ENCODE measurements at regions of chr2 and their contacts with region 1.

Region 1: DNA sequence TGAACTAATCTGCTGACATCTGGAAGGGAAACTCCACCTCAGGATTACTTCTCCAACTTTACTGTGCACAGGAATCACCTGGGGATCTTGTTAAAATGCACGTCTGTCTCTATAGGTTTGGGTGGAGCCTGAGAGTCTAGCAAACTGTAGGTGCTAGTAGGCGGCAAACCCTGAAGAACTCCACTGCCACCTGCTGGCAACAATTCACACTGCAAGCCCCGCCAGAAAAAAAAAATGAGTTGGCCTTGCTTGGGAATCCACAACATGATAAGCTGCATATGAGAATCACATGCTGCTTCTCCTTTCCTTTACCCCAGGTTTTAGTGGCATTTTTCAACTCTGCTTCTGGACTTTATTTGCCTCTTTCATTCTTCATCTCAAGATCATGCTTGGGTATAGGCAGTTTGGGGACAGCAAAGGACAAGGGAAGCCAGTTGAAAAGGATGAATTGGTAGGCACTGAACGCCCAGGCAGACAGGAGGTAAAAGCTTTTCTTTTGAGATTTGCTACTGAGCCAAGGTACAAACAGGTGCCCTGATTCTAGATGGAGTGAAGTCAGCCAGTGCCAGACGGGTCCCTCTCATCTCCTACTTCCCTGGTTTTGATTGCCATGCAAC is 88.8 kb downstream of the VIT start:
- DNase-seq: peak; percentile 84
- ATAC-seq: peak; percentile 83
- H3K4me3 ChIP-seq: no peak overlapping the region
- H3K27ac ChIP-seq: no peak overlapping the region
- H3K4me1 ChIP-seq: no peaks in the 10 kb centered on the region
- H3K27me3 ChIP-seq: peaks cover 13% of the 10 kb centered on the region
- CTCF ChIP-seq: peak; percentile 95

Region 2: GRCh38 chr2:35871672-35872071 is 913.6 kb before region 1 on chr2:
- CTCF ChIA-PET with region 1: no interaction called
- POLR2A ChIA-PET with region 1: no interaction called
- intact Hi-C with region 1: loop called (anchors 5 kb)
- DNase-seq: peak; percentile 61
- ATAC-seq: peak; percentile 60; the same call in 1 of the 2 replicates
- H3K4me3 ChIP-seq: no peak overlapping the region
- H3K27ac ChIP-seq: no peak overlapping the region
- H3K4me1 ChIP-seq: no peaks in the 10 kb centered on the region
- H3K27me3 ChIP-seq: no peaks in the 10 kb centered on the region
- CTCF ChIP-seq: peak; percentile 65

Region 3: DNA sequence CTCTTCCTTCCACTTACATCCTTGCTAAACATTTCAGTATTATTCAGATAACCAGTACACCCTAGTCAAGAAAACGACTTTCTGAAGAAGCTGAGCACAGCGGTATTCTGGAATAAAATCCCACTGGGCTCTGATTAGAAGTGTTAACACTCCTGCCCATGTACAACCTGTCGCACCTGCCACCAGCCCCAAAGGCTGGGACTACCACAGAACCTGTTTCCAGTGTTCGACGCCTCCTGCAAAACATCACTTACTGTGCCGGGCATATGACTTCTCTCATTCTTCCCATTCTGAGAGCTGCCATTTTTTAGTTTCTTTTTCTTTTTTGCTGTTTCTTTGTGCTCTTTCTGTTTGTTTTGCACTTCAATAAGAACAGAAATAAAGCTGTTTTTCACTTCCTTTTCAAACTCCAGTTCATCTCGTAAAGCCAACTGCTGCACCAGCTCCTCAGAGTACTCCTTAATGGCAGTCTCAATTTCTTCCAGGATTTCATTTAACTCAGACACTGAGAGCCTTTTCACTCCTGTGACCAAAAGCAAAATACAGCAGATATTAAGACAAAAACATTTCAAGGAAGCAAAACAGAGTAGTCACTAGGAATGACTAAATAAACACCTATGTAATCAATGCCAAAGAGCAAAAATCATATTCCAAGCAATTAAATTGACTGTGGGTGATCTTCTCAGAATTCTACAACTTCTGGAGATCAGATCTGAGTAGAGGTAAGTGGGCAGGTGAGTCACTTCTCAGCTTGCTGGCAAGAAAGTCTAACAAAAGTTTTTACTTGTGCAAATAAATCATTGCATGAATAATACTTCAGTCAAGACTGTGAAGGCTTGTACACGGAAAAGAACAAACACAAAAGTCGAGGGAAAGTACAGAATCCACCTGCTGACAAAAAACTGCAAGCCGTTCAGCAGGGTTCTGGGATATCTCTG is 206.7 kb before region 1 on chr2:
- CTCF ChIA-PET with region 1: no interaction called
- POLR2A ChIA-PET with region 1: no interaction called
- intact Hi-C with region 1: loop called (anchors 10 kb)
- DNase-seq: peak; percentile 94
- ATAC-seq: peak; percentile 82
- H3K4me3 ChIP-seq: peak overlapping the region; percentile 60
- H3K27ac ChIP-seq: peak overlapping the region; percentile 76
- H3K4me1 ChIP-seq: peaks cover 30% of the 10 kb centered on the region
- H3K27me3 ChIP-seq: no peaks in the 10 kb centered on the region
- CTCF ChIP-seq: no peak

Region 4: GRCh38 chr2:36672199-36672598 is 113.1 kb before region 1 on chr2:
- CTCF ChIA-PET with region 1: no interaction called
- POLR2A ChIA-PET with region 1: no interaction called
- intact Hi-C with region 1: loop called (anchors 10 kb)
- DNase-seq: peak; percentile 67
- ATAC-seq: peak; percentile 82
- H3K4me3 ChIP-seq: no peak overlapping the region
- H3K27ac ChIP-seq: no peak overlapping the region
- H3K4me1 ChIP-seq: peaks cover 3% of the 10 kb centered on the region; the same call in 1 of the 2 replicates
- H3K27me3 ChIP-seq: no peaks in the 10 kb centered on the region
- CTCF ChIP-seq: peak; percentile 86

Region 5: GRCh38 chr2:36770542-36771287 is 14.6 kb before region 1 on chr2:
- CTCF ChIA-PET with region 1: no interaction called
- POLR2A ChIA-PET with region 1: no interaction called
- intact Hi-C with region 1: no loop called
- DNase-seq: peak; percentile 49
- ATAC-seq: peak; percentile 69; the same call in 1 of the 2 replicates
- H3K4me3 ChIP-seq: no peak overlapping the region
- H3K27ac ChIP-seq: no peak overlapping the region
- H3K4me1 ChIP-seq: no peaks in the 10 kb centered on the region
- H3K27me3 ChIP-seq: no peaks in the 10 kb centered on the region
- CTCF ChIP-seq: peak; percentile 80

Region 6: GRCh38 chr2:36800381-36800780 is 15.1 kb after region 1 on chr2:
- CTCF ChIA-PET with region 1: no interaction called
- POLR2A ChIA-PET with region 1: no interaction called
- intact Hi-C with region 1: no loop called
- DNase-seq: no peak
- ATAC-seq: no peak
- H3K4me3 ChIP-seq: no peak overlapping the region
- H3K27ac ChIP-seq: no peak overlapping the region
- H3K4me1 ChIP-seq: peaks cover 6% of the 10 kb centered on the region; the same call in 1 of the 2 replicates
- H3K27me3 ChIP-seq: peaks cover 4% of the 10 kb centered on the region
- CTCF ChIP-seq: no peak

Region 7: GRCh38 chr2:36819095-36819711 is 33.9 kb after region 1 on chr2:
- CTCF ChIA-PET with region 1: no interaction called
- POLR2A ChIA-PET with region 1: no interaction called
- intact Hi-C with region 1: no loop called
- DNase-seq: no peak
- ATAC-seq: no peak
- H3K4me3 ChIP-seq: no peak overlapping the region
- H3K27ac ChIP-seq: no peak overlapping the region
- H3K4me1 ChIP-seq: no peaks in the 10 kb centered on the region
- H3K27me3 ChIP-seq: no peaks in the 10 kb centered on the region
- CTCF ChIP-seq: no peak

Region 8: GRCh38 chr2:36918307-36918706 is 133.0 kb after region 1 on chr2:
- CTCF ChIA-PET with region 1: interaction called, 3 read pairs
- POLR2A ChIA-PET with region 1: no interaction called
- intact Hi-C with region 1: loop called (anchors 1 kb)
- DNase-seq: peak; percentile 13
- ATAC-seq: no peak
- H3K4me3 ChIP-seq: no peak overlapping the region
- H3K27ac ChIP-seq: no peak overlapping the region
- H3K4me1 ChIP-seq: 0 out of 2 replicates have a peak, but pooled peaks cover 2% of the 10 kb centered on the region
- H3K27me3 ChIP-seq: no peaks in the 10 kb centered on the region
- CTCF ChIP-seq: peak; percentile 37; the same call in 1 of the 2 replicates

Region 9: DNA sequence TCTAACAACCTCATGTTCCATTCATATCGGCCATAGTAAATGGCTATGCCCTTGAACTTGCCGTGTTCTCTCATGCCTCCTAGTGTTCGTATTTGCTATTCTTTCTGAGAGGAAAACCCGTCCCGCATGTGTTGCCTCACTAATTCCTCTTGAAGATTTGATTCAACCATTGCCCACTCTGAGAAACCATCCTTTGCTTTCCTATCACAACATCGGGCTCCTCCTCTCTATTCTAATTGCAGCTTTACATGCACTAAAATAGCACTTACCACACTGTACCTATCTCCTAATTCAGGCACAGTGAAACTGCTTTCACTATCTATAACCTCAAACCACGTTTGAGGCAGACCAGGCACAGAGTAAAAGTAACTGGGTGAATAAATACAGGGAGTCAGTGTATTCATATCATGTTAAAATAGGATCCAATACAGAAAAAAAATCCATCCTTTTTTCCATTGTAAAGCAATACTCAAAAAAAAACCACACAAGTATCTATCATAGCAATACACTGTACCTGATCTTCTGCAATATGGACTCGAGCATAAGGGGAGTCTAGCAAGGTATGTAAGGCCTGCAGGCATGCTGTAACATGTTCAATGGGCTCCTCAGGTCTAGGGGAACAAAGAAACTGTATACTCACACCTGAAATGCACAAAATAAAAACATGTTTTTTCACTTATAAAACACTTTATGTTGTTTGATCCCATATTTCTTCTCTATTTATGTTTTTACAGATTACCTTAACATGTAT is 220.0 kb after region 1 on chr2:
- CTCF ChIA-PET with region 1: no interaction called
- POLR2A ChIA-PET with region 1: no interaction called
- intact Hi-C with region 1: loop called (anchors 1 kb)
- DNase-seq: peak; percentile 54
- ATAC-seq: peak; percentile 52; the same call in 1 of the 2 replicates
- H3K4me3 ChIP-seq: no peak overlapping the region
- H3K27ac ChIP-seq: no peak overlapping the region
- H3K4me1 ChIP-seq: peaks cover 11% of the 10 kb centered on the region
- H3K27me3 ChIP-seq: no peaks in the 10 kb centered on the region
- CTCF ChIP-seq: peak; percentile 75